HCT116 (cell line): ENCODE measurements at regions of chr2 and their contacts with region 1.

Region 1: GRCh38 chr2:191245046-191245868 is at the start of gene MYO1B:
- DNase-seq: peak; percentile 59
- ATAC-seq: peak; percentile 86
- H3K4me3 ChIP-seq: peak within 1 kb of the TSS; percentile 71 to 81
- H3K27ac ChIP-seq: peak within 1 kb of the TSS; percentile 76
- H3K4me1 ChIP-seq: peaks cover 15 to 32% of the 10 kb centered on the region in 2 experiments; a peak in 3 of 4 replicates
- H3K27me3 ChIP-seq: no peaks in the 10 kb centered on the region
- CTCF ChIP-seq: peak; percentile 33 to 54 (median 41); a peak in 4 of 6 replicates
- POLR2A ChIP-seq: peak; percentile 56
- RAD21 ChIP-seq: peak; percentile 87
- total RNA-seq, gene MYO1B: 51.7 TPM

Region 2: GRCh38 chr2:191486584-191487320 is 241.5 kb after region 1 on chr2:
- CTCF ChIA-PET with region 1: no interaction called
- POLR2A ChIA-PET with region 1: no interaction called
- RAD21 ChIA-PET with region 1: no interaction called
- intact Hi-C with region 1: loop called (anchors 2 kb)
- DNase-seq: peak; percentile 84
- ATAC-seq: peak; percentile 89
- H3K4me3 ChIP-seq: peak overlapping the region in 1 of 2 experiments; percentile 0; a peak in 1 of 4 replicates
- H3K27ac ChIP-seq: peak overlapping the region; percentile 32; the same call in 1 of the 2 replicates
- H3K4me1 ChIP-seq: peaks cover 21 to 37% of the 10 kb centered on the region in 2 experiments
- H3K27me3 ChIP-seq: no peaks in the 10 kb centered on the region
- CTCF ChIP-seq: no peak
- POLR2A ChIP-seq: no peak
- RAD21 ChIP-seq: no peak

Region 3: DNA sequence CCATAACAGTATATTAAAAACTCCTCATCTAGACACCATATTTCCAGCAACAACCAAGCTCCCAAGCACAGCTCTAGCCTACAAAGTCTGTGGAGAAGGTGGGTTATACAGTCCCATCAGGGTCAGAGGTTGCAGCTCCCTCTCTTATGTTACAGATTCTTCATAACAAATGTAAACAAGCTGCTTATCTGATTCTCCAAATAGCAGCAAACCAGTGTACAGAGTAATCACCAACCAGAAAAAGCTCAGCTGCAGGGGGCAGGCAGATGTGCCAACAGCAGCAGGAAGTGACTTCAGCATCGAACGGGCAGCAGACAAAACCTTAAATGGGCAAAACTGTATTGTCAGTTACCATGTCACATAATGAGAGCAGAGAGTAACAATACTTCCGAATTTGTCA is 379.8 kb after region 1 on chr2:
- CTCF ChIA-PET with region 1: no interaction called
- POLR2A ChIA-PET with region 1: no interaction called
- RAD21 ChIA-PET with region 1: no interaction called
- intact Hi-C with region 1: no loop called
- DNase-seq: no peak
- ATAC-seq: no peak
- H3K4me3 ChIP-seq: no peak overlapping the region
- H3K27ac ChIP-seq: no peak overlapping the region
- H3K4me1 ChIP-seq: peaks cover 0 to 7% of the 10 kb centered on the region in 2 experiments; a peak in 1 of 4 replicates
- H3K27me3 ChIP-seq: no peaks in the 10 kb centered on the region
- CTCF ChIP-seq: no peak
- POLR2A ChIP-seq: no peak
- RAD21 ChIP-seq: no peak